OCI-LY7 (cell line): ENCODE measurements at regions of chr4 and their contacts with region 1.

Region 1: DNA sequence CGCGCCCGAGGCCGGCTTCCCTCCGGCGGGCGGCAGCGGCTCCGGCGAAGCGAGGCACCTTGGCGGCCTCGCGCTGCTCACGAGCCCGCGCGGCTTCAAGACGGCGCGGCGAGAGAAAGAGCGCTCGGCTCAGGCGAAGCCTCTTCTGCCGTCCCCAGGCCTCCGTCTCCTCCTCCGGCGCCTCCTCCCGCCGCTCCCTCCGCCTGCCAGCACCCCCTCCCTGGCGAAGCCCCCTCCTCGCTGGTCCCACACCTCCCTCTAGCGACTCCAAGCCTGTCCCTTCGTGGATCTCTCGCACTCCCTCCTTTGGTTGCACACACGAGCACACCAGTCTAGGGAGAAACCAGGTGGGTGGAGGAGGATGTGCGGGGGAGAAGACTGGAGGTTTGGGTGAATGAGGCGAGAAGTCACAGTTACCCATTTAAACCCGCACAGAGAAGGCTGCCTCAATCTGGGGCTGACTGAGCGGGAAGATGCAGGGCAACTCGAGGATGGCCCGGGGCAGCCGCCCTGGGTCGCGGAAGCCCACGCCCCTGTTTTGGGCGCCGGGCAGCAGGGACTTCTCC is at the start of gene CAMK2D:
- DNase-seq: peak; percentile 91
- H3K4me3 ChIP-seq: peak within 1 kb of the TSS; percentile 89
- H3K27ac ChIP-seq: peak within 1 kb of the TSS; percentile 99
- H3K4me1 ChIP-seq: peaks cover 27% of the 10 kb centered on the region
- CTCF ChIP-seq: peak; percentile 76
- total RNA-seq, gene CAMK2D: 109 and 120 TPM in 2 replicates

Region 2: DNA sequence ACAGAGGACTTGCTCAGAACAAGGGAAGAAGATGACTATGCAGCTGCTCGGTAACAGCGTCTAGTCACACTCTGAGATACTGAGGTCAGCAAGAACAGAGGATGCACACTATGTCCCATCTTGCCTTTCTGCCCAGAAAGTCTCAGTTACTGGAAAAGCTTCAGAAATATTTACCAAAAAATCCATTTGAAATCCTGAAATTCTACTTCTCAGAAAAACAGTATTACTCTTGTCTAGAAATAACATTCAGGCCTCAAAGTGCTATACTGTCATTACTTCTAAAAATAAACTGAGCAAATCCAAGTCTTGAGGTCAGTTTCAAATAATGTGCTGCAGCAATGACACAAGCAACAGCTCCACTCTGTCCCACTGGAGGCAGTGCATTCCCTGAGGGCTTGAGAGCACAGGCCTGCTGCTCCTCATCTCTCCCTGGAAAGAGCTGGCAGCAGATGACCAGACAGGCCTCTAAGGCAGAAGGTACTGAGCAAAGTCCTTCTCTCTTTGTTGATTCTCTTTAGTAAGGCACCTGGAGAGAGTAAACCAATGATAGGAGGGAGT is 77.1 kb before region 1 on chr4:
- CTCF ChIA-PET with region 1: no interaction called
- POLR2A ChIA-PET with region 1: interaction called, 3 read pairs
- intact Hi-C with region 1: loop called (anchors 2 kb)
- DNase-seq: peak; percentile 34
- H3K4me3 ChIP-seq: no peak overlapping the region
- H3K27ac ChIP-seq: peak overlapping the region; percentile 89
- H3K4me1 ChIP-seq: peaks cover 52% of the 10 kb centered on the region
- CTCF ChIP-seq: peak; percentile 47; the same call in 1 of the 2 replicates

Region 3: DNA sequence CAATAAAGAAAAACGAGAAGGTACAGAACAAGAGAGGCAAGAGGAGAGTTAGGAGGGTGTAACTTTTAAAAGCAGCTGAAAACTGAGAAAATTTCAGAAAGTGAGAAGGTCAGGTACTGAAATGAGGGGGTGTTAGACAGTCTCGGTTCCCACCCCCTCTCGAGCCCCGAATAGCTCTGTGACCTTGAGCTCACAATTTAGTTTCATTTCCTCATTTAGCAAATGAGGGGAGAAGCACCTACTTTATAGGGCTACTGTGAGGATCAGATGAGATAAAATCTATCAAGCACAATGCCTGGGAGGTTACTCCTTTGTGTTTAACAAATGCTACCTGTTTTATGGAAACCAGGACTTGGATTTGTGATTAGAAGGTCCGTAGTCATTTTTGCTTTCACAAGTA is 841.8 kb after region 1 on chr4:
- CTCF ChIA-PET with region 1: no interaction called
- POLR2A ChIA-PET with region 1: interaction called, 3 read pairs
- intact Hi-C with region 1: loop called (anchors 5 kb)
- DNase-seq: peak; percentile 85
- H3K4me3 ChIP-seq: peak overlapping the region; percentile 93
- H3K27ac ChIP-seq: peak overlapping the region; percentile 80
- H3K4me1 ChIP-seq: peaks cover 58% of the 10 kb centered on the region
- CTCF ChIP-seq: no peak